Left lung (tissue), 14 donors: ENCODE measurements at regions of chr4 and their contacts with region 1.

Region 1: GRCh38 chr4:42865572-42866189 is 26.8 kb upstream of the GRXCR1 start:
- DNase-seq: peak in 2 of 4 donors; percentile 17 to 39
- ATAC-seq: peak; percentile 89
- H3K4me3 ChIP-seq: no peak overlapping the region
- H3K27ac ChIP-seq: no peak overlapping the region
- H3K4me1 ChIP-seq: no peaks in the 10 kb centered on the region
- H3K27me3 ChIP-seq: peaks cover 0 to 7% of the 10 kb centered on the region in 2 donors
- CTCF ChIP-seq: peak; percentile 68 to 74

Region 2: GRCh38 chr4:42570221-42570620 is 295.5 kb before region 1 on chr4:
- intact Hi-C with region 1: loop called in 1 of 2 experiments (anchors 5 kb)
- DNase-seq: peak in 1 of 4 donors; percentile 53
- ATAC-seq: peak; percentile 87
- H3K4me3 ChIP-seq: no peak overlapping the region
- H3K27ac ChIP-seq: no peak overlapping the region
- H3K4me1 ChIP-seq: peaks cover 0 to 8% of the 10 kb centered on the region in 2 donors
- H3K27me3 ChIP-seq: no peaks in the 10 kb centered on the region
- CTCF ChIP-seq: no peak

Region 3: GRCh38 chr4:42588909-42589308 is 276.8 kb before region 1 on chr4:
- intact Hi-C with region 1: no loop called
- DNase-seq: no peak
- ATAC-seq: no peak
- H3K4me3 ChIP-seq: no peak overlapping the region
- H3K27ac ChIP-seq: no peak overlapping the region
- H3K4me1 ChIP-seq: no peaks in the 10 kb centered on the region
- H3K27me3 ChIP-seq: no peaks in the 10 kb centered on the region
- CTCF ChIP-seq: no peak